WTC11 (cell line): ENCODE measurements at regions of chr2 and their contacts with region 1.

Region 1: DNA sequence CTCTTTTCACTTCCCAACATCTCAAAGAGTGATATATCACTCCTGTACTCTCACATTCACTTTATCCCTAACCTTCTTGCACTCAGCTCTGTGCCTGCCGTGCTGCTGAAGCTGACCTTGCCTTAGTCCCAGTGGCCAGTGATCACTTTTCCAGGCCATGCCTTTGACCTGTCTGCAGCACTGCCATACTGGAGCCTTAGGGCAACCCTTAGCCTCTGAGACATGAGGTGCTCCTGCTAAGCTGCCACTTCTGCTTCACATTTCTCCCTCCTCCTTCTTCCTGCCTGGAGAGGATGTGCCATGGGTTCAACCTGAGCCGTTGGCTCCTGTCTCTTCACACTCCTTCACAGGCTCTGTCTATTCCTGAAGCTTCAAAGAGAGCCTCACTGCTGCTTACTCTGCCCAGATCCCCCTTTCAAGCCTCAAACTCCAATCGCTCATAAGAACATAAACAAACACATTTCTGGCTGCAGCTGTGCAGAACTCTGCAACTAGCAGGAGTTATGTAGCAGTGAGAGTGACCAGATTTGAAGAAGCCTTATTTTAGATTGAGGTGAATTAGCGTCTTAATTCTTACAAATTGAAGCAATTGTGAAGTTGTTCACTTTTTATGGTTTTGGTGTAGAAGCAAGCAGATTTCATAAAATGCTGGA is 716.2 kb upstream of the FANCL start:
- DNase-seq: no peak
- ATAC-seq: peak; percentile 55
- H3K4me3 Mint-ChIP-seq: no peak overlapping the region
- H3K27ac Mint-ChIP-seq: peak overlapping the region; percentile 28; the same call in 1 of the 2 replicates
- H3K4me1 Mint-ChIP-seq: peaks cover 45% of the 10 kb centered on the region
- H3K27me3 Mint-ChIP-seq: no peaks in the 10 kb centered on the region
- CTCF ChIP-seq: no peak

Region 2: GRCh38 chr2:58992062-58992706 is 34.9 kb after region 1 on chr2:
- CTCF ChIA-PET with region 1: no interaction called
- POLR2A ChIA-PET with region 1: interaction called, 14 read pairs
- DNase-seq: no peak
- ATAC-seq: no peak
- H3K4me3 Mint-ChIP-seq: no peak overlapping the region
- H3K27ac Mint-ChIP-seq: no peak overlapping the region
- H3K4me1 Mint-ChIP-seq: peaks cover 8% of the 10 kb centered on the region
- H3K27me3 Mint-ChIP-seq: no peaks in the 10 kb centered on the region
- CTCF ChIP-seq: no peak